ENCODE measurements at regions of chr7 and their contacts with region 1.

Region 1: GRCh38 chr7:105013221-105013815 is 687 bp upstream of the KMT2E start:
- DNase-seq: peak; percentile 86
- H3K4me3 ChIP-seq: peak overlapping the region; percentile 97
- H3K27ac ChIP-seq: peak overlapping the region; percentile 100
- H3K27me3 ChIP-seq: no peaks in the 10 kb centered on the region
- CTCF ChIP-seq: peak; percentile 58

Region 2: DNA sequence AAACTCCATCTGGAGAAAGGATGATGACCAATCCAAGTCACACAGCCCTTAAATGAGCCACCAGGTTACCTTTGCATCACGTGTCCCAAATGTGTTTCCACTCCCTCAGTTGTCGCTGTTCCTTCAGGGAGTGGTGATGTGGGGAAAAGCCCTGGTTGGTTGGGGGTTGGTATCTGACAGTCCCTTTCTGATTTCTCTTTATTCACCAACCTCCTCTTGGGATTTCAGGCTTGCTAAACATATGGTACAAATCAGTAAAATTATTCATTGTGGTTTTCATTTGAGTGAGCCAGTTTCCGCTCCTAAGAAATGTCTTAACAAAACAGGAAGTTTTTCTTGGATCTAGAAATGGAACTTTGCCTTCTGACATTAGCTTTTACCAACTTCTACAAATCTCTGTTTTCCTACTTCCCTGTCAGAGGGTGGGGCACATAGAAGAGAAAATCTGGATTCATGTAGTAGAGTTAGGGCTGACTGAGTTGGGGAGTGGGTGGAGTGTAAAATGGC is 39.4 kb before region 1 on chr7:
- CTCF ChIA-PET with region 1: interaction called, 3 read pairs
- POLR2A ChIA-PET with region 1: interaction called, 12 read pairs
- DNase-seq: no peak
- H3K4me3 ChIP-seq: no peak overlapping the region
- H3K27ac ChIP-seq: peak overlapping the region; percentile 76
- H3K27me3 ChIP-seq: no peaks in the 10 kb centered on the region
- CTCF ChIP-seq: no peak